A673 (cell line): ENCODE measurements at regions of chr2 and their contacts with region 1.

Region 1: DNA sequence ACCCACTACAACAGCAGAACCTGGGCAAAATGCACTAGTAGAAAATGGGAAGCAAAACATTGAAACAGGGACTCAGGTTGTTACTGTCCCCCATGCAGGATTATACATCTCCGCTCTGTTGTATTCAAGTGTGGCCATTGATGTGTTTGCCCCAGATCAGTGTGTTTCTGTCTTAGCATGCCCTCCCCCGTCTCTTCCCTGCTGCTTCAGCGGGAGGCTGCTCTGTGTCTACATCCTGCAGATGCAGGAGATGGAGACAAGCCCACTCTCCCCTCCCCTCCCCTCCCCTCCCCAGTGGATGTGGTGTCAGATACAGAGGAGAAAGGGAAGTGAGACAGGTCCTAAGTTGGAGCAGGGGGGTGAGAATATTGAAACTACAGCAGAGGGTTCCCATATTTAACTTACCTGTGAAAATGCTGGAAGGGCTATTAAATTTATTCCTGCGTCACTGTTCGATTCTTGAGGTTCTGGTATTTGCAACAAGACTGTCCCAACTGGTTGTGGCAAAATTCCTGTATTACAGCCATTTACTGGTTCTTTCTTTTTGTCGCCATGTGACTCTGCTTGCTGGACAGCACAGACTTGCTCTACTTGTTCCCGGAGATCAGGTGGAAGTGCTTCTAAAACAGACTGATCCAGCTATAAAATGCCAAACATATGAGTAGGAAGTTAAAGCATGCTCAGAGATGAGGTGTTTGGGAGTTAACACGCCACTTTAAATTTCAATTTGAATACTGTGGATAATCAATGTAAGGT is 67.0 kb downstream of the EIF5B start:
- DNase-seq: no peak
- H3K4me3 ChIP-seq: no peak overlapping the region
- H3K27ac ChIP-seq: no peak overlapping the region
- H3K4me1 ChIP-seq: no peaks in the 10 kb centered on the region
- H3K27me3 ChIP-seq: no peaks in the 10 kb centered on the region
- CTCF ChIP-seq: no peak

Region 2: DNA sequence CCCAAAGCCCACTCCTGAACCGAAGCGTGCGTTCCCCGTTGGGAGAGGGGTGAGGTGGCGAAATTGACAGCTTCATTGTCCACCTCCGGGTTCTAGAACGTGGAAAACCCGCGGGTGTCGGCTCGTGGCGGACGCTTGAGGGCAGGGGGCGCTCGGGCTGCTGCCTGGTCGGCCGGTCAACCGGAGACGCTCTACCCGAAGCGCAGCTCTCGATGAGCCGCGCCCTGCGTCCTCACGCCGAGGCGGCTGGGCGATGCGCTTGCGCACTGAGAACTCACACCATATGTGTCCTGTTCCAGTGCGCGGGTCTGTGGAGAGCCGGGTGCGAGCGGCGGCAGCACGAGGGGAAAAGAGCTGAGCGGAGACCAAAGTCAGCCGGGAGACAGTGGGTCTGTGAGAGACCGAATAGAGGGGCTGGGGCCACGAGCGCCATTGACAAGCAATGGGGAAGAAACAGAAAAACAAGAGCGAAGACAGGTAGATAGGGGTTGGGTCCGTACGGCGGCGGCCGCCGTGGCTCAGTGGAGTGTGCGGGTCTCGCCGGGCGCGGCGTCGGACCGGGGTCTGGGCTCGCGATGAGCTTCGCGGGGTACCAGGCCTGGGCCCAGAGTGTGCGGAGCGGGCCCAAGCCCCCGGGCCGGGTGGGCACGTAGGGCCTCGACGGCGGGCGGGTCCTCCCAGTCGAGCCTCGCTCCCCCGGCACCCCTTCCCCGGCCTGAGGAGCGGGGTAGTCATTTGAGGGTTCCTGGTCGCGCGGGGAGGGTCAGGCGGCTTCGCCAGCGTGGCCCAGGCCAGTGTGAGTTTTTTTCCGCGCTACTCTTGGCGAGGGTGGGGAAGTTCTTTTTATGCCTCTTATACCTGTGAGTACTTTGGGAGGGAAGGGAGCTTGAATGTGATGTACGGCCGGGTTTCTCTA is 66.8 kb before region 1 on chr2 and contains the start of gene EIF5B:
- CTCF ChIA-PET with region 1: no interaction called
- POLR2A ChIA-PET with region 1: no interaction called
- intact Hi-C with region 1: loop called (anchors 2 kb)
- DNase-seq: peak; percentile 98
- H3K4me3 ChIP-seq: peak within 1 kb of the TSS; percentile 71
- H3K27ac ChIP-seq: peak within 1 kb of the TSS; percentile 86
- H3K4me1 ChIP-seq: no peaks in the 10 kb centered on the region
- H3K27me3 ChIP-seq: no peaks in the 10 kb centered on the region
- CTCF ChIP-seq: peak; percentile 78
- total RNA-seq, gene EIF5B: 73.5 and 78.7 TPM in 2 replicates